ENCODE measurements at regions of chr13 and their contacts with region 1.

Region 1: GRCh38 chr13:57123681-57124080 is 17.0 kb upstream of the PRR20A start:
- DNase-seq: no peak
- ATAC-seq: no peak
- H3K4me3 ChIP-seq: no peak overlapping the region
- H3K27ac ChIP-seq: no peak overlapping the region
- H3K4me1 ChIP-seq: no peaks in the 10 kb centered on the region
- H3K27me3 ChIP-seq: no peaks in the 10 kb centered on the region
- CTCF ChIP-seq: no peak
- EP300 ChIP-seq: no peak
- POLR2A ChIP-seq: no peak
- RAD21 ChIP-seq: no peak

Region 2: GRCh38 chr13:56789527-56789926 is 334.2 kb before region 1 on chr13:
- CTCF ChIA-PET with region 1: no interaction called
- POLR2A ChIA-PET with region 1: no interaction called
- in situ Hi-C with region 1: no loop called
- intact Hi-C with region 1: no loop called
- DNase-seq: no peak
- ATAC-seq: no peak
- H3K4me3 ChIP-seq: no peak overlapping the region
- H3K27ac ChIP-seq: no peak overlapping the region
- H3K4me1 ChIP-seq: no peaks in the 10 kb centered on the region
- H3K27me3 ChIP-seq: no peaks in the 10 kb centered on the region
- CTCF ChIP-seq: no peak
- EP300 ChIP-seq: no peak
- POLR2A ChIP-seq: no peak
- RAD21 ChIP-seq: no peak

Region 3: DNA sequence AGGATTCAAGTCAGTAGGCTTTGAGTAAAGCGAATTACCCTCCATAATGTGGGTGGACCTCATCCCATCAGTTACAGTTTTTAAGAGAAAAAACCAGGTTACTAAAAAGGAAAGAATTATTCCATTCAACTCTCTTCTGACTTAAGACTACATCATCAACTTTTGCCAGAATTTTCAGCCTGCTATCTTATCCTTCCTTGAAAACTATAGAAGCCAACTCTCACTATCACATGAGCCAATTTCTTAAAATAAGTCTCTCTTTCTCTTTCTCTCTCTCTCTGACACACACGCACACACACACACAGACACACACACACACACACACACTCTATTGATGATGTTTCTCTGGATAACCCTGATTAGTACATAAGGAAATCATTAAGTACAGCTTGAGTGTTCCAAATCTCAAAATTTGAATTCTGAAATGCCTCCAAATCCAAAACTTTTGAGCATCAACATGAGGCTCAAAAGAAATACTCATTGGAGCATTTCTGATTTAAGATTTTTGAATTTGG is 200.0 kb before region 1 on chr13:
- CTCF ChIA-PET with region 1: no interaction called
- POLR2A ChIA-PET with region 1: no interaction called
- in situ Hi-C with region 1: no loop called
- intact Hi-C with region 1: no loop called
- DNase-seq: no peak
- ATAC-seq: no peak
- H3K4me3 ChIP-seq: no peak overlapping the region
- H3K27ac ChIP-seq: no peak overlapping the region
- H3K4me1 ChIP-seq: no peaks in the 10 kb centered on the region
- H3K27me3 ChIP-seq: no peaks in the 10 kb centered on the region
- CTCF ChIP-seq: no peak
- EP300 ChIP-seq: no peak
- POLR2A ChIP-seq: no peak
- RAD21 ChIP-seq: no peak

Region 4: DNA sequence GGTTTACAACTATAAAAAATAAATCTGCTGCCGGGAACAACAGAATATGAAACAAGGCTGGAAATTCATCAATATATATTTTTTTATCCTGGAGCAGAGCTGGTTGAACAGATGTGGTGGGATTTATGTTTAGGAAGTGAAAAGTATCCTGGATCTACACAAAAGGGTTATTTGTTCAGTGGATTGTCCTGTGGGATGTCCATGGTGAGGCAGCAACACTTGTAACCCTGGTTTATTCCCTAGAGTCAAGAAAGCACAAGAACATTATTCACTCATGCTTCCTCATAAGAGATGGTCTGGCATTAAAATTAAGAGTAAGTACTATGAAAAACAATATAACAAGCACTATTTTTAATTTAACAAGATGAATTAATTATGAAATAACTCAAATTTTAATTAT is 89.3 kb after region 1 on chr13:
- CTCF ChIA-PET with region 1: no interaction called
- POLR2A ChIA-PET with region 1: no interaction called
- in situ Hi-C with region 1: loop called (anchors 25 kb)
- intact Hi-C with region 1: no loop called
- DNase-seq: no peak
- ATAC-seq: no peak
- H3K4me3 ChIP-seq: no peak overlapping the region
- H3K27ac ChIP-seq: no peak overlapping the region
- H3K4me1 ChIP-seq: no peaks in the 10 kb centered on the region
- H3K27me3 ChIP-seq: no peaks in the 10 kb centered on the region
- CTCF ChIP-seq: no peak
- EP300 ChIP-seq: no peak
- POLR2A ChIP-seq: no peak
- RAD21 ChIP-seq: no peak

Measured in HepG2 (cell line).